ENCODE measurements at regions of chr1 and their contacts with region 1.

Region 1: DNA sequence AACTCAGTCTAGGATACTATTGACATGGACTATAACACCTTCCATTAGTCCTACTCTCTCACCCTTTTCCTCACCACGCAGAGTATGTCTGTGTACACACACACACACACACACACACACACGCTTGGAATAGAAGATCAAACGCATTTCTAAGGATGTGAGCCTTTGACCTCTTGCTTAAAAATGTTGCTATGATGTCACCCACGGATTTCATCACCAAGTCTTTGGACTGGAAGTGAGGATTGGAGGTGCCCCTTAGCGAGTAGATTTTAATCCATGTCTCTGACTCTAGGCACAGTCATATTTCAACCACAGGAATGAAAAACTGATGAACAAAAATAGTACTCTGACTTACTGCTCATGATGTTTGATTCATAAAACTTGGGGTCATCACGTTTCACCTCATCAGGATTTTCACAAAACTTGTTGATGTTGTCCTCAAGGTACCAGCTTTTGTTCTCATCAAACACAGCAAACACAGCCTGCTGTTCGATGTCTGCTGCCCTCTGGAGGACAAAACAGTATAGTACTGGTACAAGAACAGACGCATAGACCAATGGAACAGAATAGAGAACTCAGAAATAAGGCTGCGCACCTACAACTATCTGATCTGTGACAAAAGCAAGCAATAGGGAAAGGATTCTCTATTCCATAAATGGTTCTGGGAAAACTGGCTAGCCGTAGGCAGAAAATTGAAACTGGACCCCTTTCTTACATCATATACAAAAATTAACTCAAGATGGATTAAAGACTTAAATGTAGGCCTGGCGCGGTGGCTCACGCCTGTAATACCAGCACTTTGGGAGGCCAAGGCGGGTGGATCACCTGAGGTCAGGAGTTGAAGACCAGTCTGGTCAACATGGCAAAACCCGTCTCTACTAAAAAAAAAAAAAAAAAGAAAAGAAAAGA is 39.9 kb downstream of the F5 start:
- DNase-seq: peak; percentile 68
- H3K4me3 Mint-ChIP-seq: no peak overlapping the region
- H3K27ac Mint-ChIP-seq: no peak overlapping the region
- H3K4me1 Mint-ChIP-seq: no peaks in the 10 kb centered on the region
- H3K27me3 Mint-ChIP-seq: no peaks in the 10 kb centered on the region

Region 2: GRCh38 chr1:168603501-168604110 is 942.7 kb before region 1 on chr1:
- CTCF ChIA-PET with region 1: interaction called, 18 read pairs
- DNase-seq: peak; percentile 82
- H3K4me3 Mint-ChIP-seq: no peak overlapping the region
- H3K27ac Mint-ChIP-seq: no peak overlapping the region
- H3K4me1 Mint-ChIP-seq: no peaks in the 10 kb centered on the region
- H3K27me3 Mint-ChIP-seq: peaks cover 12% of the 10 kb centered on the region

Region 3: GRCh38 chr1:169443923-169444322 is 102.4 kb before region 1 on chr1:
- CTCF ChIA-PET with region 1: no interaction called
- DNase-seq: no peak
- H3K4me3 Mint-ChIP-seq: no peak overlapping the region
- H3K27ac Mint-ChIP-seq: no peak overlapping the region
- H3K4me1 Mint-ChIP-seq: no peaks in the 10 kb centered on the region
- H3K27me3 Mint-ChIP-seq: peaks cover 18% of the 10 kb centered on the region

Region 4: DNA sequence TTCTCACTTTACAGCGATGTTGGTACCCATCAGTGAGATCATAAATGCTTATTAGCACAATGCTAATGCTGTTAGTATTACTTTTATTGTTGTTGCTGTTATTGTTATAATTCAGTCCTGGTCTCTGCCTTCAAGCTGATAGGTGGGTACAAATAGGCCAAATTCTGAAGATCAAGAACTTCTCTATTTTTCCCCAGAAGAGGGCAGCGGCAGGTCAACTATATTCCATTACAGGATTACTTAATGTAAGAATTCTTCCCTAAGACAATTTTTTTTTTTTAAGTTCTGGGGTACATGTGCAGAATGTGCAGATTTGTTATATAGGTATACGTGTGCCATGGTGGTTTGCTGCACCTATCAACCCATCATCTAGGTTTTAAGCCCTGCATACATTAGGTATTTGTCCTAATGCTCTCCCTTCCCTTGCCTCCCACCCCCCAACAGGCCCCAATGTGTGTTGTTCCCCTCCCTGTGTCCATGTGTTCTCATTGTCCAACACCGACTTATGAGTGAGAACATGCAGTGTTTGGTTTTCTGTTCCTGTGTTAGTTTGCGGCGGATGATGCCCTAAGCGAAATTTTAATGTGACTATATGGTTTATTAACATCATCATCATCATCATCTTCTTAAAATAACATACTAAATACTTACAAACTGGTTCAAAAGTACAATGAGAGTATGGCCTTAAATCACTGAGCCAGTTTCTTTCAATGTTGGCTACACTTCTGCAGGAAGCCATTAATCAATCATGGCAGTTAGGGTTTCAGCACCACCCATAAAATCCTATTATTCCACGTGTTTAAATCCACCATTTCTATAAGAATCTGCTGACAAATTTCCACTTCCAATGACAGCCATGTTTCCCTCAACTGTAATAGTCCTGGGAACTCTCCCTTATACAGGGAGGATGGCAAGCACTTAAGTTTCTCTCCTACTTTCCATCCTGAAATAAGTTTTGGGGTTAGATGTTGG is 79.8 kb before region 1 on chr1:
- CTCF ChIA-PET with region 1: interaction called, 24 read pairs
- DNase-seq: peak; percentile 41
- H3K4me3 Mint-ChIP-seq: no peak overlapping the region
- H3K27ac Mint-ChIP-seq: no peak overlapping the region
- H3K4me1 Mint-ChIP-seq: no peaks in the 10 kb centered on the region
- H3K27me3 Mint-ChIP-seq: no peaks in the 10 kb centered on the region

Region 5: GRCh38 chr1:169517586-169518192 is 28.7 kb before region 1 on chr1:
- CTCF ChIA-PET with region 1: no interaction called
- DNase-seq: no peak
- H3K4me3 Mint-ChIP-seq: no peak overlapping the region
- H3K27ac Mint-ChIP-seq: no peak overlapping the region
- H3K4me1 Mint-ChIP-seq: no peaks in the 10 kb centered on the region
- H3K27me3 Mint-ChIP-seq: no peaks in the 10 kb centered on the region

Region 6: GRCh38 chr1:169560066-169560465 is 13.7 kb after region 1 on chr1:
- CTCF ChIA-PET with region 1: interaction called, 15 read pairs
- DNase-seq: no peak
- H3K4me3 Mint-ChIP-seq: no peak overlapping the region
- H3K27ac Mint-ChIP-seq: no peak overlapping the region
- H3K4me1 Mint-ChIP-seq: no peaks in the 10 kb centered on the region
- H3K27me3 Mint-ChIP-seq: no peaks in the 10 kb centered on the region

Region 7: DNA sequence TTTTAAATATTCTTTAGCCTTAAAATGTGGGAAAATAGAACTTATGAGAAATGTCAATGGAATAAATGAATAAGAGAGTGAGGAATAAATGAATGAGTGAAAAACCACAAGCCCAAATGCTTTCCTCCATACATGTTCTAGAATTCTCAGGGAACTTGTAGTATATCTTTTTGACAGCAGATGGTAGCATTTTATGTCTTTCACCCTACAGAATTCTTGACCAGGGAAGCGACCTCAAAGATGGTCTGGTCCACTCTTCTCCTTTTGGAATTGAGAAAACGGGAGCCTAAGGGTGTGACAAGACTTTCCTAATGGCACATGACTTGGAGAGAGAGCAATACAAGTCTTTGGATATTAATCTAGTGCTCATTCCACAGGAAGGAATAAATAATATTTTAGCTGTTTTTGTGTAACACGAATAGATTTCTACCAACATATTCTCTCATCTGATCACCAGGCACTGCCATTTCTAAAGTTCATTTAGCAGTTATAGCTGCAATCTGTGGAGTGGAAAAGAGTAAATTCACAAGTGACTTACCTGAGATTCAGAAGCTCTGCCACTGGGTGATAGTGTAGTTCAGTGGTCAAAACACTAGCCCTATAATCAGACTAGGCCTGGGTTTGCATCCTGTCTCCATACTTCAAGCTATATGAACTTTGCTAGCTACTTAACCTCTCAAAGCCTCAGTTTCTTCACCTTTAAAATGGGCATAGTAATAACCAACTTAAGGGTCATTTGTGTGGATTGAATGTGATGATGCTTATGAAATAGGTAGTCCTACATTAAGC is 54.9 kb after region 1 on chr1:
- CTCF ChIA-PET with region 1: interaction called, 16 read pairs
- DNase-seq: no peak
- H3K4me3 Mint-ChIP-seq: no peak overlapping the region
- H3K27ac Mint-ChIP-seq: peak overlapping the region; percentile 73
- H3K4me1 Mint-ChIP-seq: peaks cover 57% of the 10 kb centered on the region
- H3K27me3 Mint-ChIP-seq: no peaks in the 10 kb centered on the region

Region 8: DNA sequence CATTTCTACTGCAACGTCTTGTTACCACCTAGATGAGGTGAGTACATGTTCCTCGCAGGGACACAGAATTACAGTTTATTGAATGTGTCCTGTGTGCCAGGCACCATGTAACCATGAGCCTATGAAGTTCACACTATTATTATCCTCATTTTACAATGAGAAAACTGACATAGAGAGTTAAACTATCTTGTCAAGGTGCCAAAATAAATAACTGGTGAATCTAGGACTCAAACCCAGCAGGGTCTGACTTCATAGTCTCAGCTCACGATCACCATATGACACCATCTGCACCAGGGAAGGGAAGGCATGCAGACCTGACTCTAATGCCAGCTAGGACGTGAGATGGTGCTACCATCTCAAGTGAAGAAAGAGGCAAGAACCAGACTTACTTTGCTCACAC is 185.1 kb after region 1 on chr1:
- CTCF ChIA-PET with region 1: no interaction called
- DNase-seq: no peak
- H3K4me3 Mint-ChIP-seq: no peak overlapping the region
- H3K27ac Mint-ChIP-seq: no peak overlapping the region
- H3K4me1 Mint-ChIP-seq: no peaks in the 10 kb centered on the region
- H3K27me3 Mint-ChIP-seq: peaks cover 33% of the 10 kb centered on the region

Region 9: GRCh38 chr1:169809370-169810095 is 263.2 kb after region 1 on chr1:
- CTCF ChIA-PET with region 1: interaction called, 15 read pairs
- DNase-seq: no peak
- H3K4me3 Mint-ChIP-seq: no peak overlapping the region
- H3K27ac Mint-ChIP-seq: no peak overlapping the region
- H3K4me1 Mint-ChIP-seq: peaks cover 2% of the 10 kb centered on the region
- H3K27me3 Mint-ChIP-seq: no peaks in the 10 kb centered on the region

Measured in activated naive CD4-positive, alpha-beta T cell treated with anti-CD3 and anti-CD28 coated beads, Interleukin-2, amount 10 ng/mL, durations not matched to agents 7 days and 5 days (primary cell).